B cell (primary cell): ENCODE measurements at regions of chr14 and their contacts with region 1.

Region 1: GRCh38 chr14:21308479-21309237 is 28.8 kb downstream of the RPGRIP1 start:
- DNase-seq: peak; percentile 88
- ATAC-seq: peak; percentile 86
- H3K4me3 ChIP-seq: peak overlapping the region; percentile 30 to 72 (median 53)
- H3K4me3 Mint-ChIP-seq: peak overlapping the region; percentile 80
- H3K27ac ChIP-seq: peak overlapping the region; percentile 70 to 76
- H3K27ac Mint-ChIP-seq: peak overlapping the region; percentile 84
- H3K4me1 ChIP-seq: peaks cover 20 to 23% of the 10 kb centered on the region in 2 donors
- H3K4me1 Mint-ChIP-seq: peaks cover 26% of the 10 kb centered on the region
- H3K27me3 ChIP-seq: no peaks in the 10 kb centered on the region
- H3K27me3 Mint-ChIP-seq: no peaks in the 10 kb centered on the region
- CTCF ChIP-seq: no peak

Region 2: GRCh38 chr14:21269252-21270046 is 39.2 kb before region 1 on chr14 and contains the start of gene HNRNPC:
- CTCF ChIA-PET with region 1: interaction called, 4 read pairs
- POLR2A ChIA-PET with region 1: interaction called, 7 read pairs
- intact Hi-C with region 1: loop called (anchors 1 kb)
- DNase-seq: peak; percentile 100
- ATAC-seq: peak; percentile 83
- H3K4me3 ChIP-seq: peak within 1 kb of the TSS; percentile 67 to 100 (median 99)
- H3K4me3 Mint-ChIP-seq: peak within 1 kb of the TSS; percentile 98
- H3K27ac ChIP-seq: peak within 1 kb of the TSS; percentile 91 to 92
- H3K27ac Mint-ChIP-seq: peak within 1 kb of the TSS; percentile 99
- H3K4me1 ChIP-seq: peaks cover 37 to 48% of the 10 kb centered on the region in 2 donors
- H3K4me1 Mint-ChIP-seq: peaks cover 40% of the 10 kb centered on the region
- H3K27me3 ChIP-seq: no peaks in the 10 kb centered on the region
- H3K27me3 Mint-ChIP-seq: no peaks in the 10 kb centered on the region
- CTCF ChIP-seq: no peak
- total RNA-seq, gene HNRNPC: 496 and 497 TPM in 2 replicates

Region 3: GRCh38 chr14:21352587-21352986 is 43.9 kb after region 1 on chr14:
- CTCF ChIA-PET with region 1: no interaction called
- POLR2A ChIA-PET with region 1: no interaction called
- intact Hi-C with region 1: loop called (anchors 2 kb)
- DNase-seq: peak; percentile 81
- ATAC-seq: peak; percentile 97
- H3K4me3 ChIP-seq: no peak overlapping the region
- H3K4me3 Mint-ChIP-seq: peak overlapping the region; percentile 38
- H3K27ac ChIP-seq: peak overlapping the region; percentile 62 to 73
- H3K27ac Mint-ChIP-seq: peak overlapping the region; percentile 83
- H3K4me1 ChIP-seq: peaks cover 10 to 11% of the 10 kb centered on the region in 2 donors
- H3K4me1 Mint-ChIP-seq: peaks cover 17% of the 10 kb centered on the region
- H3K27me3 ChIP-seq: no peaks in the 10 kb centered on the region
- H3K27me3 Mint-ChIP-seq: no peaks in the 10 kb centered on the region
- CTCF ChIP-seq: no peak

Region 4: GRCh38 chr14:21521501-21521900 is 212.8 kb after region 1 on chr14:
- CTCF ChIA-PET with region 1: no interaction called
- POLR2A ChIA-PET with region 1: no interaction called
- intact Hi-C with region 1: no loop called
- DNase-seq: no peak
- ATAC-seq: no peak
- H3K4me3 ChIP-seq: no peak overlapping the region
- H3K4me3 Mint-ChIP-seq: no peak overlapping the region
- H3K27ac ChIP-seq: no peak overlapping the region
- H3K27ac Mint-ChIP-seq: no peak overlapping the region
- H3K4me1 ChIP-seq: peaks cover under 1 to 3% of the 10 kb centered on the region in 2 donors
- H3K4me1 Mint-ChIP-seq: peaks cover 3% of the 10 kb centered on the region
- H3K27me3 ChIP-seq: peaks cover 0 to 4% (median 2%) of the 10 kb centered on the region in 4 experiments
- H3K27me3 Mint-ChIP-seq: peaks cover 32% of the 10 kb centered on the region
- CTCF ChIP-seq: no peak

Region 5: GRCh38 chr14:22252686-22253085 is 944.0 kb after region 1 on chr14:
- CTCF ChIA-PET with region 1: no interaction called
- POLR2A ChIA-PET with region 1: no interaction called
- intact Hi-C with region 1: no loop called
- DNase-seq: no peak
- ATAC-seq: no peak
- H3K4me3 ChIP-seq: no peak overlapping the region
- H3K4me3 Mint-ChIP-seq: no peak overlapping the region
- H3K27ac ChIP-seq: no peak overlapping the region
- H3K27ac Mint-ChIP-seq: no peak overlapping the region
- H3K4me1 ChIP-seq: no peaks in the 10 kb centered on the region
- H3K4me1 Mint-ChIP-seq: no peaks in the 10 kb centered on the region
- H3K27me3 ChIP-seq: peaks cover 0 to 4% (median 0%) of the 10 kb centered on the region in 4 experiments
- H3K27me3 Mint-ChIP-seq: peaks cover 20% of the 10 kb centered on the region
- CTCF ChIP-seq: no peak